ENCODE measurements at regions of chr10 and their contacts with region 1.

Region 1: GRCh38 chr10:72048450-72049124 is 39.8 kb downstream of the SPOCK2 start:
- DNase-seq: peak; percentile 93
- H3K4me3 Mint-ChIP-seq: no peak overlapping the region
- H3K27ac Mint-ChIP-seq: peak overlapping the region; percentile 63
- H3K4me1 Mint-ChIP-seq: peaks cover 15% of the 10 kb centered on the region
- H3K27me3 Mint-ChIP-seq: no peaks in the 10 kb centered on the region
- CTCF ChIP-seq: peak; percentile 98

Region 2: GRCh38 chr10:71659111-71659634 is 389.4 kb before region 1 on chr10:
- CTCF ChIA-PET with region 1: no interaction called
- POLR2A ChIA-PET with region 1: no interaction called
- intact Hi-C with region 1: no loop called
- DNase-seq: no peak
- H3K4me3 Mint-ChIP-seq: no peak overlapping the region
- H3K27ac Mint-ChIP-seq: no peak overlapping the region
- H3K4me1 Mint-ChIP-seq: no peaks in the 10 kb centered on the region
- H3K27me3 Mint-ChIP-seq: peaks cover 23% of the 10 kb centered on the region
- CTCF ChIP-seq: no peak

Region 3: GRCh38 chr10:71893920-71894319 is 154.7 kb before region 1 on chr10:
- CTCF ChIA-PET with region 1: interaction called, 50 read pairs
- POLR2A ChIA-PET with region 1: interaction called, 3 read pairs
- intact Hi-C with region 1: loop called (anchors 1 kb)
- DNase-seq: no peak
- H3K4me3 Mint-ChIP-seq: no peak overlapping the region
- H3K27ac Mint-ChIP-seq: no peak overlapping the region
- H3K4me1 Mint-ChIP-seq: peaks cover 7% of the 10 kb centered on the region
- H3K27me3 Mint-ChIP-seq: no peaks in the 10 kb centered on the region
- CTCF ChIP-seq: no peak

Region 4: DNA sequence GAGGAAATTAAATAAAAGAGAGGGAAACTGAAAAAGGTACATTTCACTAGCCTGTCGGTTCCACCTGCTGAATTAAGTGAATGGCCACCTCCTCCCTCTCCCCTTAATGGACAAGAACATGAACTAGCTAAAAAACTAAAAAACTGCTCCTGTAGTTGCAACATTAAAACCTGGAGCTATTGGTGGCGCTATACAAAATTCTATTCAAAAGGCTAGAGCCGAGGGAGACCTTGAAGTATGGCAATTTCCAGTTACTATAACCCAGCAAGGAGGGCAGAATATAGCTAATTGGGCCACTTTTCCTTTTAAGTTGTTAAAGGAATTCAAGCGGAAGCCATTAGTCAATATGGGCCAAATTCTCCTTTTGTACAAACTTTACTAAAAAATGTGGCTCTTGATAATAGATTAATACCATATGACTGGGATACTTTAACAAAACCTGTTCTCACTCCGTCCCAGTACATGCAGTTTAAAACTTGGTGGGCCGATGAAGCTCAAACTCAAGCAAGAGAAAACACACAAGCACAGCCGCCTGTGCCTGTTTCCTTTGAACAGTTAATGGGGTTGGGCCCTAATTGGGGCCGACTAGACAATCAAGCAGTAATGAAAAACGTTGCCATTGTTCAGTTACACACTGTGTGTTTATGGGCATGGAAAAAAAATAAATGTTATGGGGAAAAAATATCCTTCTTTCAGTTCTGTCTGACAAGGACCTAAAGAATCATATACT is 90.9 kb before region 1 on chr10:
- CTCF ChIA-PET with region 1: interaction called, 95 read pairs
- POLR2A ChIA-PET with region 1: interaction called, 17 read pairs
- intact Hi-C with region 1: loop called (anchors 1 kb)
- DNase-seq: no peak
- H3K4me3 Mint-ChIP-seq: no peak overlapping the region
- H3K27ac Mint-ChIP-seq: no peak overlapping the region
- H3K4me1 Mint-ChIP-seq: peaks cover 10% of the 10 kb centered on the region
- H3K27me3 Mint-ChIP-seq: no peaks in the 10 kb centered on the region
- CTCF ChIP-seq: no peak

Region 5: GRCh38 chr10:71974489-71975021 is 74.0 kb before region 1 on chr10:
- CTCF ChIA-PET with region 1: interaction called, 61 read pairs
- POLR2A ChIA-PET with region 1: interaction called, 19 read pairs
- intact Hi-C with region 1: no loop called
- DNase-seq: peak; percentile 81
- H3K4me3 Mint-ChIP-seq: peak overlapping the region; percentile 77
- H3K27ac Mint-ChIP-seq: peak overlapping the region; percentile 78
- H3K4me1 Mint-ChIP-seq: peaks cover 75% of the 10 kb centered on the region
- H3K27me3 Mint-ChIP-seq: no peaks in the 10 kb centered on the region
- CTCF ChIP-seq: no peak

Region 6: DNA sequence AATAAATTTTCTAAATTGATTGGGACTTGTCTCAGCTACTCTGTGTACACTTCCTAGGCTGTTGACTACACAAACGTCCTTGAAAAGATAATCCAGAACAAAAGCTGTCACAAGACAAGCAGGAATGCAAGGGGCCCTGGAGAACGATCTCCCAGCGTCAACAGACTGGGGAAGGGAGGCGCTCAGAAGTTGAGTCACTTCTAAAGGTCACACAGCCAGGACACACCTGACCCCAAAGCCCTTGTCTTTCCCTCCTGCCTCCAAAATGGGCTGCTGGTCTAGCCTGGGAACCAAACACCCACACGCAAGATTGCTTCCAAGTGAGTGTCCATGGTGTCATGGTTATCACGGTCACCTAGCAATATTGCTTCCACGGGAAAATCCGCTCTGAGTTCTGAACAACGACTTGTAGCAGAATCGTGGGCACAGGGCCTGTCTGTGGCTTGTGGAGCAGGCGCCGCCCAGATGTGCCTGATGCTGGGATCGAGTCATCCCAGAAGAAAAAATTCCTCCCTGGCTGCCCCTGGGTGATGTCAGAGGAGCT is 10.1 kb before region 1 on chr10:
- CTCF ChIA-PET with region 1: no interaction called
- POLR2A ChIA-PET with region 1: no interaction called
- intact Hi-C with region 1: no loop called
- DNase-seq: no peak
- H3K4me3 Mint-ChIP-seq: no peak overlapping the region
- H3K27ac Mint-ChIP-seq: no peak overlapping the region
- H3K4me1 Mint-ChIP-seq: no peaks in the 10 kb centered on the region
- H3K27me3 Mint-ChIP-seq: no peaks in the 10 kb centered on the region
- CTCF ChIP-seq: no peak

Region 7: DNA sequence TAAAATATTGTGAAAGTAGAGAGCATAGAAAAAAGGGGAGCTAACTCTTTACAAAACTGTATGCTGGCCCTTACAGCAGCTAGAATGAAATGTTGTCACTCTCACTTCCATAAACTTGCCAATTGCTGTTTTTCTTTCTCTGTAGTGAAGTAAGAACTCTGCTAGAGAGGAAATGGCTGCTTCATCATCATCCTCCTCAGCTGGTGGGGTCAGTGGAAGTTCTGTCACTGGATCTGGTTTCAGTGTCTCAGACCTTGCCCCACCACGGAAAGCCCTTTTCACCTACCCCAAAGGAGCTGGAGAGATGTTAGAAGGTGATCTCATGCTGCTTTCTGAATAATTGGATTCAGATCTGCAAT is 175.1 kb after region 1 on chr10:
- CTCF ChIA-PET with region 1: interaction called, 8 read pairs
- POLR2A ChIA-PET with region 1: interaction called, 4 read pairs
- intact Hi-C with region 1: loop called (anchors 2 kb)
- DNase-seq: no peak
- H3K4me3 Mint-ChIP-seq: no peak overlapping the region
- H3K27ac Mint-ChIP-seq: peak overlapping the region; percentile 23
- H3K4me1 Mint-ChIP-seq: peaks cover 12% of the 10 kb centered on the region
- H3K27me3 Mint-ChIP-seq: no peaks in the 10 kb centered on the region
- CTCF ChIP-seq: no peak

Measured in MCF 10A (cell line).